Mammary epithelial cell (primary cell): ENCODE measurements at regions of chr2 and their contacts with region 1.

Region 1: GRCh38 chr2:102366406-102367112 is 11.0 kb downstream of the IL18R1 start:
- DNase-seq: no peak
- H3K4me3 ChIP-seq: no peak overlapping the region
- H3K27ac ChIP-seq: no peak overlapping the region
- H3K4me1 ChIP-seq: no peaks in the 10 kb centered on the region
- H3K27me3 ChIP-seq: no peaks in the 10 kb centered on the region
- CTCF ChIP-seq: no peak

Region 2: GRCh38 chr2:102418421-102418961 is 51.9 kb after region 1 on chr2:
- CTCF ChIA-PET with region 1: no interaction called
- dilution Hi-C with region 1: loop called (anchors 5 kb)
- in situ Hi-C with region 1: no loop called
- intact Hi-C with region 1: no loop called
- DNase-seq: peak; percentile 14
- H3K4me3 ChIP-seq: no peak overlapping the region
- H3K27ac ChIP-seq: no peak overlapping the region
- H3K4me1 ChIP-seq: no peaks in the 10 kb centered on the region
- H3K27me3 ChIP-seq: peaks cover 4% of the 10 kb centered on the region
- CTCF ChIP-seq: no peak